Activated CD8-positive, alpha-beta memory T cell treated with anti-CD3 and anti-CD28 coated beads, Interleukin-2, amount 10 ng/mL, durations not matched to agents 7 days and 5 days (primary cell): ENCODE measurements at regions of chr20 and their contacts with region 1.

Region 1: GRCh38 chr20:44080646-44081267 is 106.2 kb downstream of the JPH2 start:
- DNase-seq: peak; percentile 83
- ATAC-seq: peak; percentile 95
- H3K4me3 Mint-ChIP-seq: no peak overlapping the region
- H3K27ac Mint-ChIP-seq: no peak overlapping the region
- H3K4me1 Mint-ChIP-seq: peaks cover 10% of the 10 kb centered on the region
- H3K27me3 Mint-ChIP-seq: peaks cover 31% of the 10 kb centered on the region

Region 2: GRCh38 chr20:44056010-44056698 is 24.6 kb before region 1 on chr20:
- CTCF ChIA-PET with region 1: interaction called, 43 read pairs
- DNase-seq: peak; percentile 63
- ATAC-seq: peak; percentile 66
- H3K4me3 Mint-ChIP-seq: no peak overlapping the region
- H3K27ac Mint-ChIP-seq: no peak overlapping the region
- H3K4me1 Mint-ChIP-seq: peaks cover 2% of the 10 kb centered on the region
- H3K27me3 Mint-ChIP-seq: peaks cover 59% of the 10 kb centered on the region